Dendritic cell treated with granulocyte-macrophage colony-stimulating factor and Interleukin-4, amounts not matched to agents 40 ng/mL and 50 ng/mL, for 4 days (primary cell): ENCODE measurements at regions of chr4 and their contacts with region 1.

Region 1: GRCh38 chr4:2418650-2419571 is at the start of gene CFAP99:
- H3K4me3 Mint-ChIP-seq: peak within 1 kb of the TSS; percentile 89
- H3K27ac Mint-ChIP-seq: peak within 1 kb of the TSS; percentile 87
- H3K4me1 Mint-ChIP-seq: peaks cover 50% of the 10 kb centered on the region
- H3K27me3 Mint-ChIP-seq: peaks cover 50% of the 10 kb centered on the region

Region 2: GRCh38 chr4:1991596-1992434 is 427.1 kb before region 1 on chr4:
- intact Hi-C with region 1: no loop called
- H3K4me3 Mint-ChIP-seq: no peak overlapping the region
- H3K27ac Mint-ChIP-seq: no peak overlapping the region
- H3K4me1 Mint-ChIP-seq: no peaks in the 10 kb centered on the region
- H3K27me3 Mint-ChIP-seq: no peaks in the 10 kb centered on the region

Region 3: DNA sequence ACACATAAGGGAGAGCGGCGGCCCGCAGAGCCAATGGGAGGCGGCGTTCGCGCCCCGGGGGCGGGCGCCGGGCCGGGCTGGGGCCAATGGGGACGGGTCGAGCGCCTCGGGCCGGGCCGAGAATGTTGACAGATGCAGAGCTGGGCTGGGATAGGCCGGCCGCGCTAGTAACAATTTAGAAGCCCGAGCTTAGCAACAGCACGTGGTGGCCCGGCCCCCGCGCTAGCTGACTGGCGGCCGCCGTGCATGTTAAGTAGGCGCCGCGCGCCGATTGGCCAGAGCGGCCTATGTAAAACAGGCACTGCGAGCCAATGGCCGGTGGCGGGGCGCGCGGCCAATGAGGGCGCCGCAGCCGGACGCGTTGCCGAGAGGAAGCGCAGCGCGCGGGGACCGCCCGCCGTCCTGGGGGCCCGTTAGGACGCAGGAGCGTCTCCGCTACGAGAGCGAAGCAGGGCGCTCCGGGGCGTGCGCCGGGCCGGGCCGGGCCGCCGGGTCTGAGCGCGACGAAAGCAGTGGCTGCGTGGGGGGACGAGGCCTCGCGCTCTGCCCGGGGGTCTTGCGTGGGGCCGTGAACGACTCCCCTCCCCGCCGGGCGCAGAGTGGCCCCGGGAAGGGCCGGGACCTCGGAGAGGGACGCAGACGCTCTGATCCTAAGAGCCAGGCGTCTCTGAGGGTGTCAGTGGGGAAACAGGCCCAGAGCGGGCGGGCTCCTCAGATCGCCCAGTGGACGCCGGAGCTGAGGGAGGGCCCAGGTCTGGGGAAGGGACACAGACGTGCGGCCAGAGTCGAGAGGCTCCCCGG is 156.6 kb before region 1 on chr4:
- intact Hi-C with region 1: loop called (anchors 5 kb)
- H3K4me3 Mint-ChIP-seq: peak overlapping the region; percentile 78
- H3K27ac Mint-ChIP-seq: peak overlapping the region; percentile 83
- H3K4me1 Mint-ChIP-seq: peaks cover 28% of the 10 kb centered on the region
- H3K27me3 Mint-ChIP-seq: no peaks in the 10 kb centered on the region

Region 4: DNA sequence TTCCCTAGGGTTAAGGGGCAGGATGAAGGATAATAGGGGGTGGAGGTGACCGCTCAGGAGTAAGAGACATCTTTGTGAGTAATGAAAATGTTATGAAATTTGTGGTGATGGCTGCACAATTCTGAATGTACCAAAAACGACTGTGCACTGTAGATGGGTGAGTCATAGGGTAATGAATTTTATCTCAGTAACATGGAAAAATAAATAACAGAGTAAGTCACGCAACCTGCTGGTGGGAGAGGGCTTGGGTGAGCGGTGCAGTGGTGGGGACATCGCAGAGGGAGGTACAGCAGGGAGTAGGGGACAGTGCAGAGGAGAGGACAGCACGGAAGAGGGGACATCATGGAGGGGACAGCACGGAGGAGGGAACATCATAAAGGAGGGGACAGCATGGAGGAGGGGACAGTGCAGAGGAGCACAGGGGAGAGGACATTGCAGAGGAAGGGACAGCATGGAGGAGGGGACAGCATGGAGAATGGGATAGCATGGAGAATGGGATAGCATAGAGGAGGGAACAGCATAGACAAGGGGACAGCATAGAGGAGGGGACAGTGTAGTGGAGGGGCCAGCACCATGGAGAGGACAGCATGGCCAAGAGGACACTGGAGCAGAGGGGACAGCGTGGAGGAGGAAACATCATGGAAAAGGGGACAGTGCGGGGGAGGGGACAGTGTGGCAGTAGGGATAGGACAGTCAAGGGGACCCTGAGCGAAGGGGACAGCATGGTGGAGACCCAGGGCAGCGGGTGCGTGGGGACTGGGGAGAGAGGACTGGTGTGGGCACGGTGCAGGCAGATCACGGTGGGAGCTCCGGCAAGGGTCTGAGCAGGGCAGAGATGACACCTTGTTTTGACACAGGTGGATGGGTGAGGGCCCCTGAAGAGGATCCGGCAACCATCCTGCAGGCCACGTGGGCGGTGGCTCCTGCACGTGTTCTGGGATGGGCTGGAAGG is 88.5 kb before region 1 on chr4:
- intact Hi-C with region 1: no loop called
- H3K4me3 Mint-ChIP-seq: no peak overlapping the region
- H3K27ac Mint-ChIP-seq: no peak overlapping the region
- H3K4me1 Mint-ChIP-seq: peaks cover 12% of the 10 kb centered on the region
- H3K27me3 Mint-ChIP-seq: peaks cover 8% of the 10 kb centered on the region

Region 5: GRCh38 chr4:2457481-2458295 is 38.8 kb after region 1 on chr4:
- intact Hi-C with region 1: no loop called
- H3K4me3 Mint-ChIP-seq: no peak overlapping the region
- H3K27ac Mint-ChIP-seq: no peak overlapping the region
- H3K4me1 Mint-ChIP-seq: peaks cover 9% of the 10 kb centered on the region
- H3K27me3 Mint-ChIP-seq: peaks cover 34% of the 10 kb centered on the region

Region 6: GRCh38 chr4:2608291-2608690 is 189.4 kb after region 1 on chr4:
- intact Hi-C with region 1: no loop called
- H3K4me3 Mint-ChIP-seq: no peak overlapping the region
- H3K27ac Mint-ChIP-seq: no peak overlapping the region
- H3K4me1 Mint-ChIP-seq: peaks cover 5% of the 10 kb centered on the region
- H3K27me3 Mint-ChIP-seq: no peaks in the 10 kb centered on the region